ENCODE measurements at regions of chr11 and their contacts with region 1.

Region 1: GRCh38 chr11:56345739-56346138 is at the start of gene OR8K1:
- DNase-seq: no peak
- ATAC-seq: no peak
- total RNA-seq, gene OR8K1: not detected

Region 2: DNA sequence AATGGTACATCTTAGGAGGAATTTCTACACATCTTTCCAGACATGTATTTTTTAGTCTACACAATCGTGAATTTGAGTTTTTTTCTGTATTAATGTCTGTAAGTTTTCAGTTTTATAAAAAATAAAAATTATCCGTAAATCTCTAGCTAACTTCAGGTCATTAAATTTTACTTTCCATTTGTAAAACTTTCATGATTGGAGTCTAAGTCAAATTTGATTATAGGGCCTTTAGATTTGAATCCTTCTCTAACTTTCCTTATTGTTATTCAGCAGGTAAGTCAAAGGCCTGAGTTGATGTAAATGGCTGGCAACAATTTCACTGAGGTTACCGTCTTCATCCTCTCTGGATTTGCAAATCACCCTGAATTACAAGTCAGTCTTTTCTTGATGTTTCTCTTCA is 252.7 kb before region 1 on chr11 and contains the start of gene OR8I2:
- intact Hi-C with region 1: no loop called
- DNase-seq: no peak
- ATAC-seq: no peak
- total RNA-seq, gene OR8I2: not detected

Region 3: DNA sequence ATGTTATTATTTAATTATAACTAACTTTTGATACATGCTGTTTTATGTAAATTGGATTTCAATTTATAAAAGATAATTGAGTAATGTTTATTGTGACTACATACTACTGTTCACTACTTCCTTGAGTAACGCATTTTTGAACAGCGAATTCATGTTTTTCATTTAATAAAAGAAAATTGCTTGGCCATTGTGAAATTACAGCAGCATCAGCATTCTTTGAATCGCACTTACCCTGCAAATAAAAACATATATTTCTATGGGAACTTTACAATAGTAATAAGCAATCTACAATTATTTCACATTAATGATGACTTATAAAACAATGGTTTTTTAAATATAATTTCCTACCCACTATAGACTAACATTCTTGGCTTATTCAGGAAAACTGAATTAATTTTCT is 149.0 kb before region 1 on chr11:
- intact Hi-C with region 1: no loop called
- DNase-seq: no peak
- ATAC-seq: no peak

Region 4: GRCh38 chr11:56307836-56308235 is 37.9 kb before region 1 on chr11:
- intact Hi-C with region 1: loop called (anchors 2 kb)
- DNase-seq: no peak
- ATAC-seq: no peak